Left ventricle myocardium superior (tissue), 1 donor: ENCODE measurements at regions of chr7 and their contacts with region 1.

Region 1: GRCh38 chr7:25069900-25070443 is 55.1 kb downstream of the CYCS start:
- DNase-seq: no peak
- ATAC-seq: peak; percentile 75

Region 2: GRCh38 chr7:24819916-24820689 is 249.9 kb before region 1 on chr7:
- intact Hi-C with region 1: loop called (anchors 5 kb)
- DNase-seq: peak; percentile 79
- ATAC-seq: peak; percentile 94

Region 3: DNA sequence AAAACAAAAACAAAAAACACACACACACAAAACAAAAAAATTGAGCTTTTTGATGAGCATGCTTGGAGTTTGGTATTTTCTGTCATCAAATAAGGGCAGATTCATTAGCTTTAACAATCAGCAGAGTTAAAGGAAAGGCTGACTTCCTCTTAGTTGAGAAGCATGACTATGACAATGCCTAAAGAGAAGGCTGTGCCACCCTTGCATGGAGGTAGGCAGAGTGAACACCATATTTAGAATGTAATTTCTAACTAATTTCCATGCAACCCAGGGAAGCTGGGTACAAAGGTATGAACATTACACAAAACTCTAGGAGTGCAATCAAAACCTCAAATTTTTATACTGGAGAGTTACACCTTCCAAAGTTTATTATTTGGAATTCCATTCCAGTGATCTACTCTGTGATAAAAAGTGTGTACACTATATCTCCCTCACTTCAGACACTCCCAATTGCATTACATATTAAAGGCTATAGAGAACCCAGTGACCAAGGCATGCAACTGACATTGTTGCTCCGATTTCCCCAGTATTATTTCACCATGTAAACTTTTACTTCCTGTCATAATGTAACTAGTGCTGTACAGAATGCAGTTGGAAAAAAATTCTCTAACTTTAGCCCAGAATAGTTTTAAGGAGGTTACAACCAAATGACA is 64.5 kb after region 1 on chr7:
- intact Hi-C with region 1: no loop called
- DNase-seq: no peak
- ATAC-seq: no peak